GM10248 (cell line): ENCODE measurements at regions of chr7 and their contacts with region 1.

Region 1: DNA sequence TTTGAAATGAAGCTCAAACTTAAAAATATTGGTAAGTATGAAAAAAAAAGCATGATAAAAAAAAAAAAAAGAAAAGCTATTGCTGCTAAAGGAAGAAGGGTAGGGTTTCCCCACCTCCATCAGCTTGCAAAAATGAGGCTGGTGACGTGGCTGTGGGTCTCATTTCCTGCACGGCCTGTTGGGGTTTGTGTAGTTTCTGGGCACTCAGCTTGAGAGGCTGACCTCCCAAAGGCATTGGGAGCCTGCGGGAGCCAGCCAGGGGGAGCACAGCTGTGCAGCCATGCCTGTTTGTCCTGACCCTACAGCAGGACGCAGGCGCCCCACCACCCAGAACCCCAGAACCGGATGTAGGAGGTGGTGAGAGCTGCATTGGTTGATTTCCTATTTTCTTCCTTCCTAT is 48.8 kb upstream of the CARD11 start:
- DNase-seq: peak; percentile 77
- CTCF ChIP-seq: no peak

Region 2: GRCh38 chr7:2785071-2785500 is 307.4 kb before region 1 on chr7:
- CTCF ChIA-PET with region 1: no interaction called
- POLR2A ChIA-PET with region 1: no interaction called
- DNase-seq: peak; percentile 61
- CTCF ChIP-seq: no peak

Region 3: DNA sequence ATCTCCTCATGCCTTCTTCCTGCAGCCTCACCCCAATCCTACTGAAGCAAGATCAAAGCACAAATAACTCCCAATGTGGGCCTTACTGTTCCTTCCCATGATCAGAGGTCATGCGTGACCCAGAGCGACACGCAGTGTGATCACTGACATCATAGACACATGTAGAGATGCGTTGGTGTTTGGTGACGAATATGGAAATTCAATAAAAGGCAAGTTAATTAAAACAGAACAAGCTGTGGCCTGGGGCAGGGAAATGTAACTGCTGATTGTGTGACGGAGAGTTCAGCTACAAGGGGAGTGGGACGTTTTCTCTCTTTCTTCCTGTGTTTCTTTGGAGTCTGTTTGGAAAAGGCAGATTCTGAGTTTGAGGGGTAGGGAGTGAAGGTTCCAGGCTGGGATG is 14.0 kb before region 1 on chr7:
- CTCF ChIA-PET with region 1: interaction called, 18 read pairs
- POLR2A ChIA-PET with region 1: interaction called, 5 read pairs
- DNase-seq: no peak
- CTCF ChIP-seq: no peak